Right cardiac atrium (tissue), 5 donors: ENCODE measurements at regions of chr13 and their contacts with region 1.

Region 1: DNA sequence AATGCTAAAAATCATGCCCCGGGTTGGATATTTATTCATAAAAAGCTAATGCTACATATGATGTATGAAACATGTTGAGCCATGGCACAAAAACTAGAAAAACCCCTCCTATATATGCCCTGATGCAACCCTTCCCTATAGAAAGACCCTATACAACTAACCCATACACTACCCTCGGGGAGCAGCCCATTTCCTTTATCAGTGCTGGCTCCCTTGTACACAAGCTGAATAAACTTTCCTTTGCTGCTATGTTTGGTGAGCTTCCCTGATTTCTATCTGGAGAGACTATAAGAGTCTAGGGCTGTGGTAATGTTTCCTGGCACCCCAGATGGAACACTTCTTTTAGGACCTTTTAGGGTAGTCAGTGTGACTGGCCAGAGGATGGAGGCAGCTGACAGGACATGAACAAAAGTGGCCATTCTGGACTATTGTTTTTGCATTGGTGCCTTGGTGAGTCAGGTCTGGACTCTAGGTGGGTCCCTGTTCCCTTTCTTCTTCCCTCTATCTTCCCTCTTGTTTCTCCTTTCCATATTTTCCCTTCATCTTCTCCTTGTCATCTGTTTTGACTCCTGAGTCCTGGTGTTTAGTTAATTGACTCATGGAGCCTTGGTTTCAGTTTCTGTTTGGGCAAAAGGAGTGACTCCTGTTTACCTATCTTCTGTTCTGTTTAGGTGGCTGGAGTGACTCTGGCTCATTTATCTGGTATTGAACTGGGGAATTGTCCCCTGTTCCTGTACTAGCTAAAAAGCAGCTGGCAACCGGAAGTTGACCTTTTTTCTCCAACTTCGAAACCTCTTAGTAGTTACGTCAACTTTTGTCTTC is 1321.8 kb upstream of the PCDH9 start:
- DNase-seq: no peak
- ATAC-seq: peak in 1 of 2 donors; percentile 57
- H3K4me3 ChIP-seq: no peak overlapping the region
- H3K27ac ChIP-seq: no peak overlapping the region
- H3K4me1 ChIP-seq: no peaks in the 10 kb centered on the region
- H3K27me3 ChIP-seq: no peaks in the 10 kb centered on the region

Region 2: GRCh38 chr13:68490594-68490993 is 61.3 kb before region 1 on chr13:
- intact Hi-C with region 1: loop called in 1 of 4 experiments (anchors 10 kb)
- DNase-seq: no peak
- ATAC-seq: no peak
- H3K4me3 ChIP-seq: no peak overlapping the region
- H3K27ac ChIP-seq: no peak overlapping the region
- H3K4me1 ChIP-seq: no peaks in the 10 kb centered on the region
- H3K27me3 ChIP-seq: no peaks in the 10 kb centered on the region

Region 3: GRCh38 chr13:68948586-68948985 is 396.7 kb after region 1 on chr13:
- intact Hi-C with region 1: no loop called
- DNase-seq: no peak
- ATAC-seq: no peak
- H3K4me3 ChIP-seq: no peak overlapping the region
- H3K27ac ChIP-seq: no peak overlapping the region
- H3K4me1 ChIP-seq: no peaks in the 10 kb centered on the region
- H3K27me3 ChIP-seq: no peaks in the 10 kb centered on the region